Calu3 (cell line): ENCODE measurements at regions of chr5 and their contacts with region 1.

Region 1: DNA sequence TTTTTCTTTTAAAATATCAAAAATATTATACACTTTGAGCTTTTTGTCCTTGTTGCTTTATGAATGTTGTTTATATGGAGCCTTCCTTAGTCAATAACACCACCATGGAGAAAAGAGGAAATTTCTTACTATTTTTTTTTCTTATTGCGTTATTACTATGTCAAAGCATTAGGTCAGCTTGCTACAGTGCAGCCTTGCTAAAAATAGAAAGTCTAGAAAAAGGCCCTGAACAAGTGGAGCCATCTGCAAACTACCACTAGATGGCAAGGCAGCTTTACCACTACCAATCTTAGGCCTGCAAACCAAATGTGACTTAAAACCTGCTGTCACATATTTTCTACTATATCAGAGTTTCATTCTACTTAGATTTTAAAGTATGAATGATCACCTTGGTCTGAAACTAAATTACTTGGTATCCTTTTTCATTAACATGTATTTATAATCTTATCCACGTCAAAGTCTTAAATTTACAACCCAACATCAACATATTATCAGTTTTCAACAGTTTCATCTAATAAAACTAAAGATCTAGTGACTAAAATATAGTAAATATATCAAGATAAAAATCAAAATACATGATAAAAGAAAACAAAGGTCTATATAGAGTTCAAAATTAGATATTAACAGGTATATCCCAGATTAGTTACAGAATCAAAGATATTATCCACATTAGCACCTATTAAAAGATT is 113.1 kb upstream of the ACOT12 start:
- DNase-seq: peak; percentile 61
- H3K4me3 Mint-ChIP-seq: no peak overlapping the region
- H3K27ac Mint-ChIP-seq: no peak overlapping the region
- H3K4me1 Mint-ChIP-seq: no peaks in the 10 kb centered on the region
- H3K27me3 Mint-ChIP-seq: no peaks in the 10 kb centered on the region
- CTCF ChIP-seq: peak; percentile 78

Region 2: GRCh38 chr5:81838307-81838906 is 331.4 kb after region 1 on chr5:
- CTCF ChIA-PET with region 1: interaction called, 4 read pairs
- intact Hi-C with region 1: loop called (anchors 1 kb)
- DNase-seq: peak; percentile 55
- H3K4me3 Mint-ChIP-seq: no peak overlapping the region
- H3K27ac Mint-ChIP-seq: no peak overlapping the region
- H3K4me1 Mint-ChIP-seq: peaks cover 21% of the 10 kb centered on the region
- H3K27me3 Mint-ChIP-seq: no peaks in the 10 kb centered on the region
- CTCF ChIP-seq: peak; percentile 56

Region 3: GRCh38 chr5:81851481-81852178 is 344.6 kb after region 1 on chr5:
- CTCF ChIA-PET with region 1: no interaction called
- intact Hi-C with region 1: loop called (anchors 5 kb)
- DNase-seq: peak; percentile 95
- H3K4me3 Mint-ChIP-seq: peak overlapping the region; percentile 72
- H3K27ac Mint-ChIP-seq: peak overlapping the region; percentile 53
- H3K4me1 Mint-ChIP-seq: peaks cover 47% of the 10 kb centered on the region
- H3K27me3 Mint-ChIP-seq: no peaks in the 10 kb centered on the region
- CTCF ChIP-seq: no peak

Region 4: DNA sequence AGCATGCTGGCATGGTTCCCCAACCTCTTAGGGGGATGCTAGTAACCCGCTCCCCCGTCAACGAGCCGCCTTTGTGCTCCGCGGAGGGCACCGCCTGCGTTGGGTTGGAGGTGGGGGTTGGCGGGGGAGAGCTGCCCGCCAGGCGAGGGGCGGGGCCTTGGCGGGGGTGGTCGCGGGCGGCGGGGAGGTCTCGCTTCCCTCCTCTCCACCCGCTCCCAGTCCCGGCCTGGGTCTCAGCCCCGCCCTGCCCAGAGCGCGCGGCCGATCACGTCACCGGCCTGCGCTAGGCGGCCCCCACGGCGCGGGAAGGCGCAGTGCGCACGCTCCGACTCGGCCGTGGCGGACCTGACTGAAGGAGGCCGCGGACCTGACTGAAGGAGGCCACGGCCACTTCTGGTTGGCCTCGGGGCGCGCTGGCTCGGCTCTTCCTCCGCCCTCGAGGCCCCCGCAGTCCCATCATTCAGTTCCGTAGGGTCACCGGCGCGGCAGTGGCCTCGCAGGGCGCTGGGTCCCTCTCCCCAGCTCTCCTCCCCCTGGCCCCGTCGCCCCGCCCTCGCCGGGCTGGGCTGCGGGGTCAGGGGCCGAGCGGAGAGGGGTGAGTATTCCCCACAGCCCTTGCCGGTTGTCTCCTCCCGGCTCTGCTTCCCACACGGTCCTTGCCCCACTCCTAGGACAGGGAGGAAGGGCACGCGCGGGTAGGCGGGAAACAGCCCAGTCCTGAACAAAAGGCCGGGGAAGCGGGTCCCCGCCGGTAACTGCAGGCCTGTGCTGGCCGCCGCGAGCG is 464.9 kb after region 1 on chr5 and contains the start of gene ATG10:
- CTCF ChIA-PET with region 1: no interaction called
- intact Hi-C with region 1: loop called (anchors 10 kb)
- DNase-seq: peak; percentile 95
- H3K4me3 Mint-ChIP-seq: peak within 1 kb of the TSS; percentile 77
- H3K27ac Mint-ChIP-seq: peak within 1 kb of the TSS; percentile 87
- H3K4me1 Mint-ChIP-seq: no peaks in the 10 kb centered on the region
- H3K27me3 Mint-ChIP-seq: no peaks in the 10 kb centered on the region
- CTCF ChIP-seq: no peak
- total RNA-seq, gene ATG10: 8.9 and 10.0 TPM in 2 replicates

Region 5: DNA sequence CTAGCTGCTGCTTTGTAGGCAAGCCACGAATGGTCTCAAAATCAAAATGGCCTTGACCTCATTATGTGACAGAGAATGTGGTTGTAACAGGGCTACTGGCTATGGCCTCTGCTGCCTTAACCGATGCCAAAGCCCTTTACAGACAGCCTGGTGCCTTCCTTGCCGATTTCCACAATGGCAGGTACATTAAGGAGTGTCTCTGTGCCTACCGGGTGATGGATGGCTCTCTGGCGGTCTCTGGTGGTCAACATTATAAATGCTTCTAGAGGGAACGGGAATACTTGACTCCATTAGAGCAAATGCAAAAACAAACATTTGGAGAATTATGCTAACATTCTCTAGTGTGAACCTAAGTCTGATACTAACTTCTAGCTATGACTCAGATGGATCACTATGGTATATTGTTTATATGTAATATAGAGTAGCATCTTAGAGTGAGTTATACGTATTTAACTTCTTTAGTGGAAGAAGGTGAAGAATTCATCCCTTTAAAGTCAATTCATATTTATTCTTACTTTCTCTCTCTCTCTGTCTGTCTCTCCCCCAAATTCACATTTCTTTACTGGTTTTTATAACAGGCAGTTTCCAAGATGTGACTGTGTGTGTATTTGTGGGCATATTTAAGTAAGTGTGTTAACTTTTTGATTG is 718.6 kb after region 1 on chr5:
- CTCF ChIA-PET with region 1: interaction called, 3 read pairs
- intact Hi-C with region 1: loop called (anchors 1 kb)
- DNase-seq: peak; percentile 81
- H3K4me3 Mint-ChIP-seq: no peak overlapping the region
- H3K27ac Mint-ChIP-seq: no peak overlapping the region
- H3K4me1 Mint-ChIP-seq: no peaks in the 10 kb centered on the region
- H3K27me3 Mint-ChIP-seq: no peaks in the 10 kb centered on the region
- CTCF ChIP-seq: peak; percentile 85